ENCODE measurements at regions of chr3 and their contacts with region 1.

Region 1: GRCh38 chr3:9649791-9650521 is 651 bp downstream of the MTMR14 start:
- DNase-seq: no peak
- ATAC-seq: no peak

Region 2: GRCh38 chr3:9669720-9670432 is 19.9 kb after region 1 on chr3:
- intact Hi-C with region 1: loop called (anchors 1 kb)
- DNase-seq: no peak
- ATAC-seq: peak; percentile 86

Region 3: DNA sequence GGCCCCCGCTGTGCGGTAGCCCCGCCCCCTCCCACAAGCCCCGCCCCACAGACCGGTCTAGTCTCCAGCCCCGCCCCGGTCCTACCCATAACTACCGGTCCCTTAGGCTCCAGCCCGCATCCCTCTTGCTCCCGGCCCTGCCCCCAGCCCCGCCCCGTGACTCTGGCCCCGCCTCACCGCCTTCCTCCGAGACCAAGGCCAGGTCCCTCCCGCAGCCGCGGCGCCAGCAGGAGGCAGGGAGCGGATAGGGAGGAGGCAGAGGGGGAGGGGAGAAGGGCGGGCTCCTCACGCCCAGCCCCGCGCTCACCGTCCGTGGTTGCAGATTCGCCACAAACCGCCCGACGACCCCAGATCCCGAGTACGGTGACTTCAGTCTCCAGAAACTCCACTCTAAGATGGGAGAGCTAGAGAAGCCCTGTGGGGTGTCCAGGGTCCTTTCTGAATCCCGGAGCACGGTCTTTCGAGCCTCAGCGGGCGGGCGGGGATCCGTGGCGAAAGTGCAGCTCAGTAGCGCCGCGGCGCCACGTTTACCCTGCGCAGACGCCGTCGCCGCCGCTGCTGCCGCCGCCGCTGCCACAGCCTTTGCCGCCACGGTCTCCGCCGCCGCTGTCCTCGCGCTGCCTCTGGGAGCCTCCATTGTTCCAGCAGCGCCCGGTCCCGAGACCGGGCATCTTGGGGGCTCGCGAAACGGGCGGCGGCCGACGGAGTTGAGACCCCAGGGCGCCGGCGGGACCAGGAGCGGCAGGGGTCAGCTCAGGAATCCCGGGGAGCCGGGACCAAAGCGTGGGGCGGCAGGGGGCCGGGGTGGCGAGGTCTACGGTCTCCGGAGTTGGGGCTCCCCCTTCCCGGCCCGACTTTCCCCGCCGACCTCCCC is 81.5 kb after region 1 on chr3 and contains the start of gene BRPF1:
- intact Hi-C with region 1: loop called (anchors 1 kb)
- DNase-seq: peak; percentile 100
- ATAC-seq: peak; percentile 99
- total RNA-seq, gene BRPF1: 10.9 TPM

Region 4: GRCh38 chr3:9749645-9750555 is 99.9 kb after region 1 on chr3 and contains the start of gene OGG1:
- intact Hi-C with region 1: loop called (anchors 5 kb)
- DNase-seq: peak; percentile 98
- ATAC-seq: peak; percentile 98
- total RNA-seq, gene OGG1: 10.5 TPM

Region 5: DNA sequence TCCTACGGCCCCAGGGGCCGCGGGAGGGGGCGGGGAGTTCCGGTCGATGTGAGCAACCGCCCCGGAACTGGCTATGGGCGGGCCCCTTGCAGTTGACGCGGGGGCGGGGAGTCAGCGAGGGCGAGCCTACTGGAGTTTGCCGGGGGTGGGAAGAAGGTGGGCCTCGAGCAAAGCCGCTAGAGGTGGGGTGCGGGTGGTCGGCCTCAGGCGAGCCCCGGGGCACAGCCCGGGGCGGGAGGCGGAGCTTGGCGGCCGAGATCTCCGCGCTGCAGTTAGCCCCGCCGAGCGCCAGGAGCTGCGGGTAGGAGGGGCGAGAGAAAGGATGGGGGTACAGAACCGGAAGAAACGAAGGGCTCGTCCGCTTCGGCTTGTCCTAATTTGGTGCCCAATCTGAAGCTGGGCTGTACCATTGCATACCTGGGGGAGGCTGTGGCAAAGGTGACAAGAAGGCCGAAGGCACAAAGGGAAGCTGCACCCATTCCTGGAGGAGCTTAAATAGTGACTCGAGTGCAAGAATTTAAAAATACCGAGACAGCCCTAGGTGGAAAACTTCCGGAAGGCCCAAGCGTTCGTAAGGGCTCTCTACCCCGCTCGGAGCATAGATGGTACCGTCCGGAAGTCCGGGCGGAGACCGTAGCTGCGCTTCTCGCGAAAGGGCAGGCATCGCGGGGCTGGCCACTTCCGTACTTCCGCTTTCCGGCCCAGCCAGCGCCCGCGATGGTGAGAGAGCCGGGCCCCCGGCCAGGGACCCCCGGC is 142.6 kb after region 1 on chr3 and contains the starts of genes ARPC4 and TADA3:
- intact Hi-C with region 1: loop called (anchors 5 kb)
- DNase-seq: peak; percentile 98
- ATAC-seq: peak; percentile 95
- total RNA-seq, gene ARPC4: 70.8 TPM
- total RNA-seq, gene TADA3: 48.4 TPM